ENCODE measurements at regions of chr3 and their contacts with region 1.

Region 1: GRCh38 chr3:11140054-11140712 is 14.1 kb upstream of the HRH1 start:
- DNase-seq: peak in 1 of 2 experiments; percentile 62
- ATAC-seq: no peak
- H3K4me3 ChIP-seq: no peak overlapping the region
- H3K27ac ChIP-seq: peak overlapping the region; percentile 16 to 66; a peak in 5 of 6 replicates
- H3K4me1 ChIP-seq: peaks cover 29% of the 10 kb centered on the region
- CTCF ChIP-seq: no peak
- EP300 ChIP-seq: no peak
- POLR2A ChIP-seq: no peak
- RAD21 ChIP-seq: no peak

Region 2: DNA sequence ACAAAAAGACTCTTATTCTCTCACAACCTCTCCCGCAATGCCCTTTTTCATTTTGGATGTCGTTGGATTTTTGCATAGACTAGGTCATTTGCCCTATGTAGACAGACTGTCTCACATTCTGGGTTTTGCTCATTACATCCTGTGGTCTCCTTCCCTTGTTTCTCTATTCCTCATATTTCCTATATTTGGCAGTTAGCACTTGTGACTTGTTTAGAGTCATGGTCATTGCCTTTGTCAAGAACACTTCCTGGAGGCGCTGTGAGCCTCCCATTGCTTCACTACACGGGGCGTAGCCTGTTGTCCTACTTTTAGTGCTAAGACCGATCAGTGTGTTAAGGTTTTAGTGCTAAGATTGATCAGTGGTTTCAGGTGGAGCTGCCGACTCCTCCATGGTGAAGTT is 908.0 kb before region 1 on chr3:
- CTCF ChIA-PET with region 1: no interaction called
- POLR2A ChIA-PET with region 1: no interaction called
- DNase-seq: no peak
- ATAC-seq: no peak
- H3K4me3 ChIP-seq: no peak overlapping the region
- H3K27ac ChIP-seq: no peak overlapping the region
- H3K4me1 ChIP-seq: no peaks in the 10 kb centered on the region
- CTCF ChIP-seq: no peak
- EP300 ChIP-seq: no peak
- POLR2A ChIP-seq: no peak
- RAD21 ChIP-seq: no peak

Region 3: DNA sequence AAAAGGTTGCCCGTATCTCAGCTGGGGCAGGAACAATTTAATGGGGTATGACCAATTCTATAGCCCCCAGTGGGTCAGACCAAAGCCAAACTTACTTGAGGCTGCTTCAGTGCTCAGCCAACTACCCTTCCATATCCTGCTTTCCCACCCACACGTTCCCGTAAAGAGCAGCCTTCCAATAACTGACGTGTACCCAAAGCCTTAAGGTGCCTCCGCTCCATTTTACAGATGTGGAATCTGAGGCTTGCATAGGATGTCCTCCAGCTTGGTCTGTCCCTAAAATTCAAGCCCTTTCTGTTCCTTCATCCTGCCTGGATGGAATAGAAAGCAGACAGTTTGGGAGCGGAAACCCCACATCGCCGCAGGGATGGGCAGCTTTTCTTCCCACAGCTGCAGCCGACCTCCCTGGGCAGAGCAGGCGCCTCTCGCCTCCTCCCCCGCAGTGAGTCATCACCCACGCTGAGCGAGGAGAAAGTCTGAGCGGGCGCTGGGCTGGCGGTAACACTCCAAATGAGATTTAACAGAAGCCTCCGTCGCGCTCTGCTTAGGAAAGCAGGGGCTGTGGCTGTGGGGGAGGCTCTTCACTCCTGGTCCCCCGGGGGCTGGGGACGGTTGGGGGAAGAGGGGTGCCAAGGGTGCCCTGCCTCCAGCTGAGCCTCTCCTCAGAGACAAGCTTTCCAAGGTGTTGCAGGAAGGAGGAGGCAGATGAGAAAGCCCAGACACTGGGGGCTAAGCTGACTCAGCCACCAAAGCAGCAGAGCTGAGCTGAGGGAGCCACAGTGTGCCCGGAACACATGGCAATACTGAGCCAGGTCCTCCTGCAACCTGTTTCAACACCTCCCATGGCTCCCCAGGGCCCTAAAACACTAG is 43.7 kb before region 1 on chr3:
- CTCF ChIA-PET with region 1: interaction called, 7 read pairs
- POLR2A ChIA-PET with region 1: interaction called, 15 read pairs
- DNase-seq: peak; percentile 73 to 88
- ATAC-seq: peak; percentile 93 to 95
- H3K4me3 ChIP-seq: peak overlapping the region; percentile 16
- H3K27ac ChIP-seq: peak overlapping the region; percentile 78 to 92
- H3K4me1 ChIP-seq: peaks cover 16% of the 10 kb centered on the region
- CTCF ChIP-seq: no peak; the same call in 2 of the 3 replicates
- EP300 ChIP-seq: peak in 1 of 2 experiments; percentile 44; a peak in 1 of 5 replicates
- POLR2A ChIP-seq: no peak
- RAD21 ChIP-seq: peak in 1 of 2 experiments; percentile 38; a peak in 3 of 5 replicates